Panc1 (cell line): ENCODE measurements at regions of chr5 and their contacts with region 1.

Region 1: GRCh38 chr5:142134331-142135010 is 25.9 kb downstream of the NDFIP1 start:
- DNase-seq: no peak
- ATAC-seq: no peak
- H3K4me3 ChIP-seq: no peak overlapping the region
- H3K27ac ChIP-seq: no peak overlapping the region
- H3K4me1 ChIP-seq: no peaks in the 10 kb centered on the region
- H3K27me3 ChIP-seq: no peaks in the 10 kb centered on the region
- CTCF ChIP-seq: no peak

Region 2: DNA sequence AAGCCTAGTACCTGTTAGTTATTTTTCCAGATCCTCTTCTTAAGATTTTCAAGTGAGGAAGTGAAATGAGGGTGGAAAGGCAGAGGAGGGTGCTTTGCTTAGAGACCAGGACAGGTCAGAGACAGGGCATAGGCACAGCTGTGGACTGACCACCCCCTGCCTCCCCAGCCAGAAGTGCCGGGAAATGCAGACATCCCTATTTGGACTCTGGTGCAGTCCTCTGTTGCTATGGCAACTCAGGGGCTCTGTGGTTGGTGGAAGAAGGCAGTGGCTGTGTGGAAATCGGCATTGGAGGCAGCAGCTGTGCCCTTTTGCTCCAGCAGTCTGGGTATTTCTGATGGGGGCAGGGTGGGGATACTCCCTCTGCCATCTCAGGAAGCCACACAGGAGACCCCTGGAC is 69.2 kb before region 1 on chr5:
- CTCF ChIA-PET with region 1: no interaction called
- POLR2A ChIA-PET with region 1: no interaction called
- in situ Hi-C with region 1: loop called (anchors 5 kb)
- intact Hi-C with region 1: no loop called
- DNase-seq: no peak
- ATAC-seq: peak; percentile 19; the same call in 1 of the 2 replicates
- H3K4me3 ChIP-seq: no peak overlapping the region
- H3K27ac ChIP-seq: no peak overlapping the region
- H3K4me1 ChIP-seq: no peaks in the 10 kb centered on the region
- H3K27me3 ChIP-seq: 0 out of 2 replicates have a peak, but pooled peaks cover 3% of the 10 kb centered on the region
- CTCF ChIP-seq: no peak